ENCODE measurements at regions of chr6 and their contacts with region 1.

Region 1: DNA sequence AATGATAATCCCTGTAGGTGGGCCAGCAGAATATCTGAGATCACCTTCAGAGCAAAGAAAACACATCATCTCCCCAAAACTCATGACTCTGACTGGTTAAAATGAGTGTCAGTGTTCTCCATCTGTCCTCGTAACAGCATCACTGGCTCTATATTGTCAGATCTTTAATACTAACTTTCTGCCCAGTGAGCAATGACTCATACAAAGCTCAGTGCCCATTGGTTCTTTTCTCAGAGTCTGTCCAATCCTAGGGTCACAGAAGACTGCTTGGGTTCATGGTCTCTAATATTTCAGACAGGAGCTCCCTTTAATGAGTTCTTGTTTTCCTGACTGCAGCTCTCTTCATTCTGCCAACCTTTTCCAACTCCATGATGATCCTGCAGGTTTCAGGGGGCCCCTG is 36.4 kb downstream of the HLA-DPB1 start:
- DNase-seq: no peak
- H3K4me3 ChIP-seq: no peak overlapping the region
- H3K27ac ChIP-seq: no peak overlapping the region
- H3K4me1 ChIP-seq: no peaks in the 10 kb centered on the region
- H3K27me3 ChIP-seq: peaks cover 2 to 8% of the 10 kb centered on the region in 2 donors
- CTCF ChIP-seq: no peak
- POLR2A ChIP-seq: no peak

Region 2: GRCh38 chr6:33132081-33132524 is 20.0 kb after region 1 on chr6:
- intact Hi-C with region 1: no loop called
- DNase-seq: no peak
- H3K4me3 ChIP-seq: no peak overlapping the region
- H3K27ac ChIP-seq: no peak overlapping the region
- H3K4me1 ChIP-seq: no peaks in the 10 kb centered on the region
- H3K27me3 ChIP-seq: no peaks in the 10 kb centered on the region
- CTCF ChIP-seq: no peak
- POLR2A ChIP-seq: no peak

Region 3: DNA sequence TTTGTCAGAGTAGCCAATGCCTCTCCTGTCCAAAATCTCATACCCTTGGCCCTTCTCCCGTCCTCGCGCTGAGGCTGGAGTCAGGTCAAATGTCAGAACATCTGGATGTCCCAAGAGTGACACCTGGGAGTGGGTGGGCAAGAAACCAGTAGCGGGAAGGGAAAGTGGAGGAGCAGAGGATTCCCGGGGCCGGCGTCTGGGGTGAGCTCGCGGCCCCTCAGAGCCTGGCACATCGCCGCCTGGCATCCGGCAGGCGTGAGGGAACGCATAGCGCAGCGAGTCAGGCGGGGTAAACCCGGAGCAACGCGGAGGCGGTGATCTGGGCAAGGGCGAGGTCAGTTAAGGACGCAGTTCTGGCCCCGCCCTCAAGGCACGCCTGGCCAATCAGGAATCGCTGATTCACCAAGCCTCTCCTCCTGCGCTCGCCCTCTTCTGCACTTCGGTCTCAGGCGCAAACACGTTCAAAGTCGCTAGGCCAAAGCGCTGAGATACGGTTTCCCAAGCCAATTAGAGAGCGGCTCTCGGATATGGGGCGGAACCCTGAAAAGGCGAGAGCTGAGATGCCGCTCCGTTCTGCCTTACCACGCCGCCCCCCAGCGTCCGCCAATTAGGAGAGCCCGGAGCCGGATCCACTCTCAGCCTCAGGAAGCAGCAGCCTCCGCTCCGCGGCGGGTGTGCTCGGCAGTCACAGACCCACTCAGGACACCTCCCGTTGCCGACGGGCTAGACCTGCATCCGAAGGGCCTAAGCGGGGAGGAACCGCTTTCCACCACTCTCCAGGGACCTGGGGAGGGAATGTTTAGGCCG is 137.0 kb after region 1 on chr6:
- intact Hi-C with region 1: loop called (anchors 10 kb)
- DNase-seq: peak; percentile 97 to 98
- H3K4me3 ChIP-seq: peak overlapping the region; percentile 48 to 69 (median 69)
- H3K27ac ChIP-seq: peak overlapping the region; percentile 93 to 95
- H3K4me1 ChIP-seq: peaks cover 0 to 6% of the 10 kb centered on the region in 2 donors
- H3K27me3 ChIP-seq: no peaks in the 10 kb centered on the region
- CTCF ChIP-seq: no peak
- POLR2A ChIP-seq: peak; percentile 33